Left ventricle myocardium inferior (tissue), 1 donor: ENCODE measurements at regions of chr14 and their contacts with region 1.

Region 1: DNA sequence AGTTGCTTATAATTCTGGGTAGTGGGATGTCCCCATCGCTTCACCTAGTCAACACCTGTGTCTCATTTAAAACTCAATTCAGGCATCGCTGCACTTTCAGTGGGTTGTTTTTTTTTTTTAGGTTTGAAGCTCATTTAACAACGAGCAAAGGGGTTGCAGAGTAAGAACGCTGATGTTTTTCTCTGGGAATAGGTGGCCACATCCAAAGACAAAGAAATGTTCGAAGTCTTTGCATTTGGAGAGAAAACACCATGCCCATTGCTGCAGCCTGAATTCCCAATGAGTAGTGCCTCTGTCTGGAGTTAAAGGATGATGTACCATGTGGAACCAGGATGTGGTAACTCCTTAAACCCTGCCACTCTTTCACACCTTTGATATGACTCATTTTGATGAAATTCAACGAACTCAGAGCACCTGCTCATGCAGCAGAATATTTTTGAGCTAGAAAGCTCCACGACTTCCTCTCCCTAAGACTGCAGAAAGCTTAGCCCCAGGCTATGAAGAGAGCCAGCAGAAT is 35.1 kb upstream of the BATF start:
- DNase-seq: no peak
- H3K4me3 ChIP-seq: no peak overlapping the region
- H3K27ac ChIP-seq: no peak overlapping the region
- H3K4me1 ChIP-seq: no peaks in the 10 kb centered on the region
- H3K27me3 ChIP-seq: no peaks in the 10 kb centered on the region
- CTCF ChIP-seq: no peak

Region 2: DNA sequence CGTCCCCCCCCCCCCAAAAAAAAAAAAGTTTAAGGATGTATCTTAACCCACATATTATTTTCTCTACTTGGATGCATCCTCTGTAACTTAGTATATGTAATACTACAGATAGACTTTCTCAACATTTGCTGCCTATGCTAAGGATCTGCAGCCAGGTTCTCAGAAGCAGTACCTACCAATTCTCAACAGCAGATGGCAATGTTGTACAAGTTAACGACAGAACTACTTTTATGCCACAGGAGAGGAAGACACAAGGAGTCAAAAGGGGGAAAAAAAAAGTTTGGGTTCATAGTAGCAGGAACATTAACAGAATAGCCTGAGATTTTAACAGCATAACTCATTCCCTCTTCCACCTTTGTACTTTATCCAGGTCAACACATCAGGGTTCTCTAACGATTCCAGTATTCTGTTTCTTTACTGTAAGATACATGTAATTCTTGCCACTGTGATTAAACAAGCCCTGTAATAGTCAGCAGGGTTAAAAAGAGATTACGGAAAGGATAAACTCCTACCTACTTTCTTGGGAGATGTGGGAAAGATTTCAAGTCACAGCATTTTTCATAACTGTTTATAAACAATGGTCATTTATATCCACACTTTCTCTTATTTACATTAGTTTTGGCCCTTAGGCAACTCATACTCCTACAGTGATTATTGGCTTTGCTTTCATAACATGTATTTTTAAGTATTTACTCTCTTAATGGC is 354.7 kb before region 1 on chr14:
- intact Hi-C with region 1: loop called (anchors 10 kb)
- DNase-seq: no peak
- H3K4me3 ChIP-seq: no peak overlapping the region
- H3K27ac ChIP-seq: peak overlapping the region; percentile 46
- H3K4me1 ChIP-seq: peaks cover 19% of the 10 kb centered on the region
- H3K27me3 ChIP-seq: no peaks in the 10 kb centered on the region
- CTCF ChIP-seq: peak; percentile 80

Region 3: DNA sequence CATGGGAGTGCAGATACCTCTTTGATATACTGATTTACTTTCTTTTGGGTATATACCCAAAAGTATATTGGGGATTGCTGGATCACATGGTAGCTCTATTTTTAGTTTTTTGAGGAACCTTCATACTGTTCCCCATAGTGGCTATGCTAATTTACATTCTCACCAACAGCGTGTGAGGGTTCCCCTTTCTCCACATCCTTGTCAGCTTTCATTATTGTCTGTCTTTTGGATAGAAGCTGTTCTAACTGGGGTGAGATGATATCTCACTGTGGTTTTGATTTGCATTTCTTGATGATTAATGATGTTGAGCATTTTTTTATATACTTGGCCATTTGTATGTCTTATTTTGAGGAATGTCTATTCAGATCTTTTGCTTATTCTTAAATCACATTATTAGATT is 103.5 kb before region 1 on chr14:
- intact Hi-C with region 1: no loop called
- DNase-seq: no peak
- H3K4me3 ChIP-seq: no peak overlapping the region
- H3K27ac ChIP-seq: no peak overlapping the region
- H3K4me1 ChIP-seq: peaks cover 3% of the 10 kb centered on the region
- H3K27me3 ChIP-seq: no peaks in the 10 kb centered on the region
- CTCF ChIP-seq: no peak